AG04449 (cell line): ENCODE measurements at regions of chr10 and their contacts with region 1.

Region 1: DNA sequence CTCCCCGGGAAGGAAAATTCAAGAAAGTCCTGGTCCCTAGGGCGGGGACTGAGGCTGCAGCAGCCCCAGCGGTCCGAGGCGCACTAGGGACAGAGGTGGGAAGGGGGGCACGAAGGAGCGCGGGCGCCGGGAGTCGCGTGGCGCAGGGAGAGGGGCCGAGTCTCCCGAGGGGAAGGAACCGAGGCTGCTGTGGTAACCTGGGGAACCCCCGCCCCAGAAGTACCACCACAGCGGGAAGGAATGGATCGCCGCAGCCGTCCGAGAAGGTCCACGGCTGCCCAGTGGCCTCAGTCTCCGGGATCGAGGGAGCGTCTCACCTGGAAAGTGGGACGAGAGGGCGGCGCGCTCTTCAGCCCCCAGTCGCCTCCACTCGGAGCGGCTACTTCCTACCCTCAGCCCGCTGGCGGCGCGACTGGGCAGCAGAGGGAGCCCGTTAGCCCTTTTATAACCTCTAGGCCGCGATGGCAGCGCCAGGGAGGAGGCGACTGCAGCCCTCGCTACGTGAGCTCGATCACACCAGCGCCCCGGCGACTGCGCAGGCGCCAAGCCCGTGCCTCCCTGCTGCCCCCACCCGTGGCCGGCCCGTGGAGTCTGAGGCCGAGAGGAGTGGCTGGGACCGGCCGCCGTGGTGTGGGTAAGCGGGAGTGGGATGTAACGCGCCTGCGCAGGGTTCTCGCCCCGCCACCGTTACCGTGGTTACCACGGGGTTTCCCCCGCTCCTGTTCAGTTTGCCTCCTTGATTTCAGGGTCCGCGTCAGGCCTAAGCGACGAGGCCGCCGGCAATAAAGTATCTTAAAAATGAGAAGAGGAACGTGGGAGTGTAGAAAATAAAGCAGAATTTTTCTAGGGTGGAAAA is at the start of gene P4HA1:
- DNase-seq: peak; percentile 77
- H3K4me3 ChIP-seq: peak within 1 kb of the TSS; percentile 98
- CTCF ChIP-seq: peak; percentile 72

Region 2: DNA sequence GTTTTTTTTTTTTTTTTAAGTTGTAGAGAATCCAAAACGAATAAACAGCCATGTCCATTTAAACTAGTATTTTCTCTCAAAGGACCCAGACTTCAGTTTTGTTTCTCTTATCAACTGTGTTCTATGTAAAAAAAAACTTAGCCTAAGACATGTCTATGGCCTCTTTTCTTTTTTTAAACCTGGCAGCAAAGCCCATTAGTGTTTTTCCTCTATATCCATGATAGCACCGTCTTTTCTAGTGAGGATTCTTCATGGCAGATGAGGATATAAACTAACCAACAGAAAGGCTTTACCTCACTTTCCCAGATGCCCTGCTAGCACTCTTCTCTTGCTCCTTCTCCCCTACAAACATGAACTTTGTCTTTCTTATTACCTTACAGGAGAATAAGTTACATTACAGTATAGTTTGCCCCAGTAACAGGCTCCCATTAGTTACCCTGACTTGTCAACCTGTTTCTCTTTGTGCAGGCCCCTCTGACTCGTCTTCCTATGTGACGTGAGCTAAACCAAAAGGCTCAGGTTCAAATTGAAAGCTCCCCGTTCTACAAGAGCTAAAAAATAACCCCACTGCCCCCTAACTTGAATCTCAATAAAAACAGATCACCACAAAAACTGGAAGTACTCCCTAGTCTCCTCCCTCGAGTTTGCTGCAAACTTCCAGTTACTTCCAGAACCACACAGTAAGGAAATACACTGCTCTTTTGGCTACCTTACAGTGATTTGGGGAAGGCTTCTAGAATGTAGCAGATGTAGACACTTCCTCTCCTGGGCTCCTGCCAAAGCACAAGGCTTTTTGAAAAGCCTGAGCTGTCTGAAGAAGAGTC is 20.1 kb before region 1 on chr10:
- CTCF ChIA-PET with region 1: interaction called, 6 read pairs
- POLR2A ChIA-PET with region 1: interaction called, 20 read pairs
- DNase-seq: peak; percentile 37
- H3K4me3 ChIP-seq: no peak overlapping the region
- CTCF ChIP-seq: no peak

Region 3: GRCh38 chr10:73110345-73110849 is 13.7 kb after region 1 on chr10 and contains the start of gene NUDT13:
- CTCF ChIA-PET with region 1: interaction called, 15 read pairs
- POLR2A ChIA-PET with region 1: interaction called, 33 read pairs
- DNase-seq: no peak
- H3K4me3 ChIP-seq: peak within 1 kb of the TSS; percentile 56
- CTCF ChIP-seq: no peak

Region 4: DNA sequence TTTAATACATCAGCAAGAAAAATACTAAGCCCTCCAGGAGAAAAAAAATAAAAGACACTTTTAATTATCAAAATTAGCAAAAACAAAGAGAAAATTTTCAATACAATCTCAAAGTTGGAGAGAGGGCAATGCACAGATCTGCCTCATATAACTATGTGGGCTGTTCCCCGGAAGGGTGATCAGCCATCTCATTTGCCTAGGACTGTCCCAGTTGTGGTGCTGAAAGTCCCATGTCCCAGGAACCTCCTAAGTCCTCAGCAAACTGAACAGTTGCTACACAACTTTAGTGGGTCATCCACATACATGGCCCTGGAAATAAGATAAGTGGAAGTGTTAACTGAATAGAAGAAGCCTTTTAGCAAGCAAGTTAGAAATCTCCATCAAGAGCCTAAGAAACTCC is 247.6 kb after region 1 on chr10:
- CTCF ChIA-PET with region 1: no interaction called
- POLR2A ChIA-PET with region 1: no interaction called
- DNase-seq: no peak
- H3K4me3 ChIP-seq: no peak overlapping the region
- CTCF ChIP-seq: no peak

Region 5: DNA sequence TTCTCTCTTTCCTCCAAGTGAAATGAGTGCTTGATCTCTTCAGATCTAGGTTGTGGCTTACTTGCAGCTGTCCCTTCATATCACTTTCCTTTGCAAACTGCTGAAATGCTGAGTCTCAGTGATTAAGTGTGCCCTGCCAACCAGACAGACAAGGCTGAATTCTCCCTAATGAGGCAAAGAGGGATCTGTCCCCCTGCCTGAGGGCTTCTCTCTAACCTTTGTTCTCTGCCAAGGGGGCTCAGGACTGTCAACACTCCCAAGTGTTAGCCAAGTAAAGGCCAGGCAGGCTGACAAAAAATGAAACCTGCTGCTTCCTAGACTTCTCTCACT is 336.8 kb after region 1 on chr10 and contains the start of gene MSS51:
- CTCF ChIA-PET with region 1: no interaction called
- POLR2A ChIA-PET with region 1: no interaction called
- DNase-seq: no peak
- H3K4me3 ChIP-seq: no peak within 1 kb of the TSS
- CTCF ChIP-seq: no peak

Region 6: DNA sequence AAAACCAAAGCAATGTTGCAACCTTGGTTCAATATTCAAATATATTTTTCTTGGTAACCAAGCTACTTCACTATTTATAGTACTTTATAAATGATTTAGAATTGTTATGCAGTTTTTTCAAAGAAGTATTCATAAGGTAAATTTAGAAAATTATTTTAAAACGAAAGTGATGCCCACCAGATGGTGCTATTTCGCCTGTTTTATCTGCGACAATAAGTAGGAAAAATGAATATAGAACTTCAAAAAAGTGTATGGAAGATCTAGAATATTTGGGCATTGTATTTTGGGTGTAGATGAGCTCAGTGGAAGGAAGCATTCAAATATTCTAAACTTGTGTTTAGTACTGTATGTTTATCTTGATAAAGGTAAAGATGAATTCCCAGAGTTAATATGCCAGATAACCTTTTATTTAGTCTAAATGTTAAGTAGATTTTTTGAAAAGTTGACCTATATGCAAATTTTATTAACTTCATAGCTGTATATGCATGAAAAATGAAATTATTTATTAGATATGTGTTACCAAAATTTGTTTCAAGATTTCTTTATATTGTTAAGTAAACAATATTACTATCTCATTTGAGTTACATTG is 1147.5 kb after region 1 on chr10:
- CTCF ChIA-PET with region 1: no interaction called
- POLR2A ChIA-PET with region 1: no interaction called
- DNase-seq: no peak
- H3K4me3 ChIP-seq: no peak overlapping the region
- CTCF ChIP-seq: peak; percentile 12